ENCODE measurements at regions of chr2 and their contacts with region 1.

Region 1: DNA sequence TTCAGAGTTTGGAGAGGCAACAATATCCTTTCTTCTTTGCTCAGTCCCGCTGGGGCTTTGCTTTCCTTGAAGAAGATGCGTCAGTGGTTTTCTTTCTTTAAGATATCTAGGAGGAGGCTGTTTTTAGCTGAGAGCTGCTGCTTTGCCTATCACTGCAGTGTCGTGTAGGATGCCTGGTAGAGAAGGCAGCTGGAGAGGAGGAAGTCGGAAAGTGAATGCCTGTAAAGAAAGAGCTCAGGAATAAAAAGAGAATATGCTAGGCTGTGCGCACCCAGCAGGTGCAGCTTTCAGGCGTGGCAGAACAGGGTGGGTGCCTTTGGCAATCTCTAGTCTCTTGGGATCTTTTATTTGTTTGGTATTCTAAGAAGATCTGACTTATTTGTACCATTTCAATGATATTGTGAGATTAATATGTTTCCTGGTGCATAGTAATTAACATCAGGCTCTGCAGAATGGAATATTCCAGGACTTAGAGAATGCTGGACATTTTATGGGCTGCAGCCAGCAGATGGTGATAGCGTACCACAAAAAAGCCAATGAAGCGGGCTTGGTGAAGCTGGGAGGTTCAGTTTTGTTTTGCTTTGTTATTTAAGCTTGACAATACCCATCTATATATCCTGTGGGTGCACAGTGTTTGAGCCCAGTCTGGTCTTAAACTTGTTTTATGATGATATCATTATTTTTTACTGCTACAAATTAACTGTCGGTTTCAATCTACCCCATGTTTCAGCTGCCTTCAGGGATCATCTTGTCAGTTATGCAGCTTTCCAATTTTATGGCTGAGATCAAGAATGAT is 34.9 kb downstream of the CAVIN2 start:
- DNase-seq: peak; percentile 54
- H3K4me3 ChIP-seq: peak overlapping the region in 1 of 2 experiments; percentile 8; a peak in 1 of 4 replicates
- H3K27ac ChIP-seq: no peak overlapping the region
- H3K4me1 ChIP-seq: peaks cover 0 to 6% of the 10 kb centered on the region in 2 experiments; a peak in 2 of 4 replicates
- H3K27me3 ChIP-seq: no peaks in the 10 kb centered on the region
- CTCF ChIP-seq: peak; percentile 93
- EP300 ChIP-seq: no peak
- RAD21 ChIP-seq: peak; percentile 98

Region 2: DNA sequence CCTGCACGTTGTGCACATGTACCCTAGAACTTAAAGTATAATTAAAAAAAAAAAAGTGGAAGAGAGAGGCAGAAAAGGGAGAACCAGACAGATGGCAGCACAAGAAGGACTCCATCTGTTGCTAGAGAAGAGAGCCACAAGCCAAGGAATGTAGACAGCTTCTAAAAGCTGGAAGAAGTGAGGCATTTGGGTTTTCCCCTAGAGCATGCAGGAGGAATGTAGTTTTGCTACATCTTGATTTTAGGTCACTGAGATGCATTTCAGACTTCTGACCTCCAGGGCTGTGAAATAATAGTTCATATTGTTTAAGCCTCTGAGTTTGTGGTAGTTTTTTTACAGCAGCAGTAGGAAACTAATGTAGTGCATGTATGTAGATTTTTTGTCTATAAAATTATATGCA is 11.1 kb before region 1 on chr2:
- CTCF ChIA-PET with region 1: interaction called, 34 read pairs
- POLR2A ChIA-PET with region 1: no interaction called
- DNase-seq: no peak
- H3K4me3 ChIP-seq: no peak overlapping the region
- H3K27ac ChIP-seq: no peak overlapping the region
- H3K4me1 ChIP-seq: peaks cover 0 to 6% of the 10 kb centered on the region in 2 experiments; a peak in 2 of 4 replicates
- H3K27me3 ChIP-seq: no peaks in the 10 kb centered on the region
- CTCF ChIP-seq: no peak
- EP300 ChIP-seq: no peak
- RAD21 ChIP-seq: no peak

Region 3: DNA sequence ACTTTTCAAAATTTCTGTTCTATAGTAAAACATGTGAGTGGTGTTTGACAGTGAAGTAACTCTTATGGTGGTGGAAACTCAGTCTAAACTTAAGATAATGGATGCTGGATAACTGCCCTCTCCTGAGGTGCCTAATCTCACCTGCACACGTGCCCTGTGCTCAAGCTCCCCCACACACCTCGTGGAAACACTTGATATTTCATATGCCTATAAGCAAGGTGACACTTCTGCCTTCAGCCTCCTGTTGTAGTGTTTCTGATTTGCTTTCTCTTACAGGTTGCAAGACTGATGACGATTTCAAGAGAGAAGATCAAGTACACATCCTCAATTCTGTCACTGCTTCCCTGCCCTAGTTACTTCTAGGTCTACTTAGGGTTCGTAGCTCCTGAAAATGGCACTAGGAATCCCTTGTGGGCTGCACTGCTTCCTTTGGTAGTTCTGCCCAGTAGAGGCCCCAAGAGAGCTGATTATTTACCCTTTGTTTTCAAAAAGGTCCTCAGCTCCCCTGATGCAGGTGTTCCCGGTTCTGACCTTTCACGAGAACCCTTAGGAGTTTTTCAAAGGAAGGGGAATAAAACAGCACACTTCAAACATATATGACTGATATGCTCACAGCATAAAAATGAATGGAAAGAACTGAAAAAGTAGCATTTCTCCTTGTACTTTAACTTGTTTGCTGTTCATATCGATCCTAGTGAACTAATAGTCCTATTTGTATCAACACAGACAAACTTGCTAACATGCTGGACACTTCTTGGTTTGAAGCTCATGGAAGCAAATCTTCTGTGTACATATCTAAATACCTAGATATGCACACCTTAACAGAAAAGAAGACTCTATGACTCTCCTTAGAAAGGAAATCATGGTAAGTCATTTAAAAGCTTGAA is 28.2 kb after region 1 on chr2:
- CTCF ChIA-PET with region 1: interaction called, 12 read pairs
- POLR2A ChIA-PET with region 1: no interaction called
- DNase-seq: no peak
- H3K4me3 ChIP-seq: no peak overlapping the region
- H3K27ac ChIP-seq: no peak overlapping the region
- H3K4me1 ChIP-seq: peaks cover 0 to 9% of the 10 kb centered on the region in 2 experiments; a peak in 2 of 4 replicates
- H3K27me3 ChIP-seq: no peaks in the 10 kb centered on the region
- CTCF ChIP-seq: no peak
- EP300 ChIP-seq: no peak
- RAD21 ChIP-seq: no peak

Region 4: DNA sequence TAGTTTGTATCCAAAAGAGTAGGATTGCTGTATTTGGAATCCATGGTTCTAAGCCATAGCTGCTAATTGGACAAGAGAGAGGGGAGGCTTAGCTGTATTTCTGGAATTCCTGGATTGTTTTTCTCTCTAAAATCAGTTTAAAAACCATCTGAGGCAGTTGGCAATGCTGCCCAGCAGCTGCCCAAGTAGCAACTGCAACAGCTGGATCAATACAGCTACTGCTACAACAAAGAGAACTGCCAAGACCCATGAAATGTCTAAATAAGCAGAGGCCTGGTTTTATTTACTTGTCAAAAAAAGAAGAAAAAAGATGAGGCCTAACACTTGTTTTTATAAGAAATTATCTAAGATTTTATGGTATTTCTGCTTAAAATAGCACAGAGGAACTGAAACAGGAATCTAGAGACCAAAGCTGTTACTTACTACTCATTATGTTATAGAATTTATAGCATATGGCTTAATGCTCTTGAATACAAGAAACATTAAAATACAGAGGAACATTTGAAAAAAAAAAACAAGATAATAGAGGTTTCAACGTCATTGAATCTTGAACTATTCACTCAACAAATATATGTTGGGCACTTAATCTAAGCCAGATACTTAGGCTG is 343.6 kb after region 1 on chr2:
- CTCF ChIA-PET with region 1: interaction called, 306 read pairs
- POLR2A ChIA-PET with region 1: no interaction called
- DNase-seq: no peak
- H3K4me3 ChIP-seq: no peak overlapping the region
- H3K27ac ChIP-seq: peak overlapping the region in 1 of 2 experiments; percentile 11; a peak in 1 of 4 replicates
- H3K4me1 ChIP-seq: no peaks in the 10 kb centered on the region; a peak in 1 of 4 replicates
- H3K27me3 ChIP-seq: no peaks in the 10 kb centered on the region
- CTCF ChIP-seq: no peak
- EP300 ChIP-seq: no peak
- RAD21 ChIP-seq: no peak

Region 5: DNA sequence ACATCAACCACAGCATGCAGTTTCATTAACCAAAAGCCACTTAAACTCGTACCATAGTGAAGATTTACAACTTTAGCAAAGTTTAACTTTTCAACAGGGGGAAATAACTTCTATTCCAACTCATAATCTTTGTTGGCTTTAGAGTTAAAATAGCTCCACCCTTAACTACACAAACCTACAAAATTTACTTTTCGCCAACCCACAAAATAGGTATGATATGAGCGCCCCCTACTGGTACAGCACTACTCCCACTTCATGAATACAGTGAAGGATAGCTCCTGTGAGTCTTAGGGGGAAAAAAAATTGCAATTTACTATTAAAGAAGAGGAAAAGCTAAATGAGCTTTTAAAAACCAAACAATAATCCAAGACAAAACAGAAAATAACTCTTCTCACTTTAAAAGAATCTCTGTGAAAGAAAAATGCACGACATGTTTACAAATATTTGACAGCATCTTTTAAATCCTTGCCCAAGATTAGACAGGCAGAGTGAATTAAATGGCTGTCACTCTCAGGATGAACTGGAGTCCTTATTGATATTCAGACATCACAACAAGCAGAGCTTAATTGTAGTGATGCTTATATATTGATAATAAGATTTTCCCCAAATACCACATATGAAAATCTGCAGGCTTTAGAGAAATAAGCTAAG is 350.5 kb after region 1 on chr2:
- CTCF ChIA-PET with region 1: interaction called, 306 read pairs
- POLR2A ChIA-PET with region 1: interaction called, 5 read pairs
- DNase-seq: peak; percentile 12
- H3K4me3 ChIP-seq: no peak overlapping the region; a peak in 1 of 4 replicates
- H3K27ac ChIP-seq: no peak overlapping the region
- H3K4me1 ChIP-seq: no peaks in the 10 kb centered on the region
- H3K27me3 ChIP-seq: no peaks in the 10 kb centered on the region
- CTCF ChIP-seq: peak; percentile 99
- EP300 ChIP-seq: no peak
- RAD21 ChIP-seq: peak; percentile 95

Region 6: GRCh38 chr2:192194866-192195547 is 383.0 kb after region 1 on chr2 and contains the start of gene TMEFF2:
- CTCF ChIA-PET with region 1: interaction called, 11 read pairs
- POLR2A ChIA-PET with region 1: no interaction called
- DNase-seq: peak; percentile 98
- H3K4me3 ChIP-seq: peak within 1 kb of the TSS; percentile 57 to 83
- H3K27ac ChIP-seq: peak within 1 kb of the TSS in 1 of 2 experiments; percentile 65; a peak in 2 of 4 replicates
- H3K4me1 ChIP-seq: peaks cover 0 to 25% of the 10 kb centered on the region in 2 experiments; a peak in 2 of 4 replicates
- H3K27me3 ChIP-seq: no peaks in the 10 kb centered on the region; the same call in 1 of the 2 replicates
- CTCF ChIP-seq: peak; percentile 62
- EP300 ChIP-seq: no peak; a peak in 1 of 4 replicates
- RAD21 ChIP-seq: no peak; the same call in 1 of the 2 replicates
- polyA plus RNA-seq, gene TMEFF2: 5.4 and 5.8 TPM in 2 replicates

Measured in SK-N-SH (cell line).